ENCODE measurements at regions of chr14 and their contacts with region 1.

Region 1: GRCh38 chr14:93939304-93940229 is 12.4 kb downstream of the FAM181A start:
- DNase-seq: peak; percentile 82 to 92
- ATAC-seq: peak; percentile 52 to 63 (median 56)
- H3K4me3 ChIP-seq: no peak overlapping the region
- H3K27ac ChIP-seq: peak overlapping the region; percentile 98
- H3K4me1 ChIP-seq: peaks cover 77% of the 10 kb centered on the region
- H3K27me3 ChIP-seq: no peaks in the 10 kb centered on the region
- CTCF ChIP-seq: peak; percentile 87

Region 2: DNA sequence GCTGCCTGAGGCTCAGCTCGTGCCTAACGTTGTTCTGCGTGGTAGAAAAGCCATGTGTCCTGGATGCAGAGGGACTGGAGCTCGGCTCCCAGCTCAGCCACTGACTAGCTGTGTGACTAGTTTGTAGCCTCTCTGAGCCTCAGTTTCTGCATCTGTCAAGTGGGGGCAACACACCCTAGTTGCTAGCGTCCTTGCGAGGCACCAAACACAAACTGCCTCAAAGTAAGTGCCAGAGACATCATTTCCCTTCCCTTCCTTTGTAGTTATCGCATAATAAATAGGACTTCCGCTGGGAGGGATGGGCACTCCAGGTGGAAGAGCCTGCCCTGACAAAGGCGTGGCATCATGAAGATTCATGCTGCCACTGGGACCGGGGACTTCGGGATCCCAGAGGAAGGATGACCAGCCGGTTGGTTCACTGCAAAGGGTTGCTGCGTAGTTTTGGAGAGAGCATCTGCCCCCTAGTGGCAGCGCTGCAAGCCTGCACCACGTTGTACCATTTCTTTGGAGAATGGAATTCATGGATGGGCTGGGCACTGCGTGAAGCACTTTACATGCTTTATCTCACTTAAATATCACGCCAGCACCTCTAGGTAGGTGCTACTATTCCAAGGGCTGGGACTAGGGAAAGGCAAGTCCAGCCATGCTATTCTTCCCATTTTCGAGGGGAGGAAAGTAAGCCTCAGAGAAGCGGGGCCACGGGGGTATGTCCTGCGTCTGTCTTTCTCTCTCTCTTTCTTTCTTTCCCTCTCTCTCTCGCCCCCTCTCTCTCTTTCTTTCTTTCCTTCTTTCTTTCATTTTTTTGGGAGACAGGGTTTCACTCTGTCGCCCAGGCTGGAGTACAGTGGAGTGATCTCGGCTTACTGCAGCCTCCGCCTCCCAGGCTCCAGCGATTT is 62.2 kb after region 1 on chr14:
- intact Hi-C with region 1: loop called (anchors 1 to 5 kb)
- DNase-seq: peak; percentile 57 to 75
- ATAC-seq: peak; percentile 67 to 77 (median 72)
- H3K4me3 ChIP-seq: no peak overlapping the region
- H3K27ac ChIP-seq: peak overlapping the region; percentile 68
- H3K4me1 ChIP-seq: peaks cover 32% of the 10 kb centered on the region
- H3K27me3 ChIP-seq: no peaks in the 10 kb centered on the region
- CTCF ChIP-seq: peak; percentile 99

Region 3: GRCh38 chr14:94143239-94143638 is 203.7 kb after region 1 on chr14:
- intact Hi-C with region 1: loop called (anchors 5 to 10 kb)
- DNase-seq: no peak
- ATAC-seq: no peak
- H3K4me3 ChIP-seq: no peak overlapping the region
- H3K27ac ChIP-seq: no peak overlapping the region
- H3K4me1 ChIP-seq: no peaks in the 10 kb centered on the region
- H3K27me3 ChIP-seq: no peaks in the 10 kb centered on the region
- CTCF ChIP-seq: peak; percentile 16

Region 4: GRCh38 chr14:94769391-94770250 is 830.1 kb after region 1 on chr14 and contains the start of gene GSC:
- intact Hi-C with region 1: no loop called
- DNase-seq: peak; percentile 66 to 82
- ATAC-seq: peak in 3 of 4 donors; percentile 68 to 81 (median 70)
- H3K4me3 ChIP-seq: peak within 1 kb of the TSS; percentile 66
- H3K27ac ChIP-seq: peak within 1 kb of the TSS; percentile 41
- H3K4me1 ChIP-seq: peaks cover 6% of the 10 kb centered on the region
- H3K27me3 ChIP-seq: peaks cover 0 to 95% (median 44%) of the 10 kb centered on the region in 3 donors
- CTCF ChIP-seq: no peak
- total RNA-seq, gene GSC: 0.36 to 0.94 (median 0.62) TPM

Measured in psoas muscle (tissue), 8 donors.